A549 (cell line): ENCODE measurements at regions of chr13 and their contacts with region 1.

Region 1: DNA sequence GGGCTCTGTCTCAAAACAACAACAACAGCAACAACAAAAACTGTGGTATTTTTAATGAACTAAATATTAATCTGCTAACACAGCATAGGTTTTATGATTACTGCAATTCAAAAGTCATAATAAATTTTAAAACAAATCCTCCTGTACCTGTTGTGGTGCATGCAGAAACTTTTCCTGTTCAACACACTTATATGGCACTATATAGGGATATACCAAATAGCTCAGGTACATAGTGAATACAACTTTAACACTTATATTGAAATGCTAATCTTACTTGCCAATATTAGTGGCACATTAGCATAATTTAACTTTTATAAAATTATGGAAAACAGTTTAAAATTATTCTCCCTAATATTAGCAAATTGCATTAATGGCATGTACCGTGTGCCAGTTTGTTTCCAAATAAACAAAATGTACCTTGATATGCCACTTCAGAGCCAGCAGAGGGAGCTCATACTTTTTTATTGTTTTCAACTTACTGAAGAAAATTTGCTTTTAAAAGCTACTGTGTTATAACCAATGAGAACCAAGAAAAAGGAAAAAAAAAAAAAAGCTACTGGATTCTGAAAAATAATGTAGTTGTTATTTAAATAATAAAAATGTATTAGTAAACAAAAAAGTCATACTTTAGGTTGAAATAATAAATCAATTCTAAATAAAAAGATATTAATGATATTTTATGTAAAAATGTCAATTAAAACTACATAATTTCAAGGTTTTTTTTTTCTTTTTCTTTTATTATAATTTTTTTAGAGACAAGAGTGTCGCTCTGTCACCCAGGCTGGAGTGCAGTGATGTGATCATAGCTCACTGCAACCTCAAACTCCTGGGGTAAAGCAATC is 18.0 kb upstream of the RBM26 start:
- DNase-seq: peak in 1 of 2 experiments; percentile 44
- ATAC-seq: peak in 1 of 2 experiments; percentile 61; a peak in 3 of 6 replicates
- H3K4me3 ChIP-seq: no peak overlapping the region
- H3K27ac ChIP-seq: no peak overlapping the region
- H3K4me1 ChIP-seq: no peaks in the 10 kb centered on the region
- CTCF ChIP-seq: peak; percentile 68
- EP300 ChIP-seq: no peak
- POLR2A ChIP-seq: no peak
- RAD21 ChIP-seq: peak; percentile 70 to 76

Region 2: DNA sequence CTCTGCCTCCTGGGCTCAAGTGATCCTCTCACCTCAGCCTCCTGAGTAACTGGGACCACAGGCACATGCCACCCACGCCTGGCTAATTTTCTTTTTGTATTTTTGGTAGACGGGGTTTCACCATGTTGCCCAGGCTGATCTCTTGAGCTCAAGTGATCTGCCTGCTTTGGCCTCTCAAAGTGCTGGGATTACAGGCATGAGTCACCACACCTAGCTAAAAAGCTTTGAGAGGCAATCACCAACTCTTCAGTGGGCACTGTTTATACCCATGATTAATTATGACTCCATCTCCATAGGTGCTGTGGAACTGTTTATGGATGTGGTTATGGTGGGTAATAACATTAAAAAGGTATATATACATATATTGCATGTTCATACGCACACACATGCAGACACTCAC is 10.5 kb before region 1 on chr13:
- CTCF ChIA-PET with region 1: interaction called, 10 read pairs
- POLR2A ChIA-PET with region 1: no interaction called
- DNase-seq: no peak
- ATAC-seq: no peak
- H3K4me3 ChIP-seq: no peak overlapping the region
- H3K27ac ChIP-seq: no peak overlapping the region
- H3K4me1 ChIP-seq: no peaks in the 10 kb centered on the region
- CTCF ChIP-seq: no peak
- EP300 ChIP-seq: no peak
- POLR2A ChIP-seq: no peak
- RAD21 ChIP-seq: no peak

Region 3: DNA sequence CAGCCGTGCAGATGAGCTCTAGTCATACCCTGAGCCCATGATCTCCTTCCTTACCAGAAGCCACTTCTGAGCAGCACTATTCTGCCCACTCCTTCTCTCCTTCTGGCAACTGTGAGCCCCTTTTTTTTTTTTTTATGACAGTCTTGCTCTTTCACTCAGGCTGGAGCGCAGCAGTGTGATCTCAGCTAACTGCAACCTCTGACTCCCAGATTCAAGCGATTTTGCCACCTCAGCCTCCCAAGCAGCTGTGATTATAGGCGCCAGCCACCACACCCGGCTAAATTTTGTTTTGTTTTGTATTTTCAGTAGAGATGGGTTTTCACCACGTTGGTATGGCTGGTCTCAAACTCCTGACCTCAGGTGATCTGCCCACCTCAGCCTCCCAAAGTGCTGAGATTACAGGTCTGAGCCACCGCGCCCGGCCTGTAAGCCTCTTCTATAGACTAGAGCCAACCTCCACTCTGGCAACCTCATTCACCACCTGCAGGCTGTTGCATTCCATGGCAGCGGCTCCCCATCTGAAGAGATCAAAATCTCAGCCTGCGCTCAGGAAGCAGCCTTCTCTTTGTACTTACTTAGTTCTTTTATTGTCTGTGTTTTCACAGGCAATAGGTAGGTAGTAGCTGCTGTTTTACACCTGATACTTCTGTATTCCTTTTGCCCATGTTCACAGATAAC is 22.1 kb after region 1 on chr13:
- CTCF ChIA-PET with region 1: no interaction called
- POLR2A ChIA-PET with region 1: no interaction called
- DNase-seq: no peak
- ATAC-seq: no peak
- H3K4me3 ChIP-seq: no peak overlapping the region
- H3K27ac ChIP-seq: no peak overlapping the region
- H3K4me1 ChIP-seq: peaks cover 11% of the 10 kb centered on the region; the same call in 2 of the 3 replicates
- CTCF ChIP-seq: no peak
- EP300 ChIP-seq: no peak
- POLR2A ChIP-seq: no peak
- RAD21 ChIP-seq: no peak

Region 4: DNA sequence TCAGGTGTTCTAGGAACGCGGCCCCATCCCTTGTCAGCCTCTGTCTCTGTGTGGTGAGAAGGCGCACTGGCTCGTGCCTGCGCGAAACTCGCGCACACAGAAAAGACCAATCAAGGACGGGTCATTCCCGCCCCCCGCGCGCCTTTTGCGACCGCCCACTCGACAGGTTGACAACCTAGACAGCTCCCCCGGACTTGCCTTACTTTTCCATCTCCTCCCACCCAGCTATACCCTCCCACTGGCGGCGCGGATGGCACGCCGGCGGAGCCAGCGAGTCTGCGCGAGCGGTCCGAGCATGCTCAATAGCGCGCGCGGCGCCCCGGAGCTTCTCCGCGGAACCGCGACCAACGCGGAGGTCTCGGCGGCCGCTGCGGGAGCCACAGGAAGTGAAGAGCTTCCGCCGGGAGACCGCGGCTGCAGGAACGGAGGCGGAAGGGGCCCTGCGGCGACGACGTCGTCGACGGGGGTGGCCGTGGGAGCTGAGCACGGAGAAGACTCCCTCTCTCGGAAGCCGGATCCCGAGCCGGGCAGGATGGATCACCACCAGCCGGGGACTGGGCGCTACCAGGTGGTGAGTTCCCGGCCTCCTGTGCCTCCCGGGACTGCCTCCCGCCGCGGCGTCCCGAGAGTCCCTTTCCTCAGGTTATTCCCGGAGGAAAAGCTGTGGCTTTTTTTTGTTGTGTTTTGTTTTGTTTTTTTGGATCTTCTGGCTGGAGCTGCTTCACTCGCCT is 57.1 kb after region 1 on chr13 and contains the start of gene NDFIP2:
- CTCF ChIA-PET with region 1: interaction called, 17 read pairs
- POLR2A ChIA-PET with region 1: interaction called, 8 read pairs
- DNase-seq: peak; percentile 32 to 83
- ATAC-seq: peak; percentile 82 to 91
- H3K4me3 ChIP-seq: peak within 1 kb of the TSS; percentile 69
- H3K27ac ChIP-seq: peak within 1 kb of the TSS; percentile 73 to 93
- H3K4me1 ChIP-seq: peaks cover 40% of the 10 kb centered on the region
- CTCF ChIP-seq: no peak
- EP300 ChIP-seq: no peak
- POLR2A ChIP-seq: peak; percentile 70
- RAD21 ChIP-seq: no peak
- polyA plus RNA-seq, gene NDFIP2: 39.9 and 41.7 TPM in 2 replicates

Region 5: GRCh38 chr13:79541426-79542049 is 117.5 kb after region 1 on chr13:
- CTCF ChIA-PET with region 1: interaction called, 52 read pairs
- POLR2A ChIA-PET with region 1: interaction called, 3 read pairs
- DNase-seq: peak; percentile 9 to 61
- ATAC-seq: peak; percentile 47 to 62; a peak in 2 of 6 replicates
- H3K4me3 ChIP-seq: no peak overlapping the region
- H3K27ac ChIP-seq: no peak overlapping the region
- H3K4me1 ChIP-seq: no peaks in the 10 kb centered on the region
- CTCF ChIP-seq: peak; percentile 76
- EP300 ChIP-seq: no peak
- POLR2A ChIP-seq: no peak
- RAD21 ChIP-seq: peak; percentile 82 to 83